Stomach (tissue), 19 donors: ENCODE measurements at regions of chr19 and their contacts with region 1.

Region 1: GRCh38 chr19:46265217-46265828 is 31.5 kb upstream of the HIF3A start:
- DNase-seq: peak; percentile 74 to 93
- H3K4me3 ChIP-seq: no peak overlapping the region
- H3K27ac ChIP-seq: no peak overlapping the region
- H3K4me1 ChIP-seq: peaks cover 0 to 14% (median 0%) of the 10 kb centered on the region in 4 donors
- H3K27me3 ChIP-seq: peaks cover 0 to 70% (median 7%) of the 10 kb centered on the region in 3 donors
- CTCF ChIP-seq: peak in 5 of 7 experiments; percentile 76 to 93 (median 90)
- EP300 ChIP-seq: no peak
- POLR2A ChIP-seq: no peak

Region 2: GRCh38 chr19:46025835-46026234 is 239.5 kb before region 1 on chr19:
- intact Hi-C with region 1: loop called (anchors 5 kb)
- DNase-seq: no peak
- H3K4me3 ChIP-seq: no peak overlapping the region
- H3K27ac ChIP-seq: no peak overlapping the region
- H3K4me1 ChIP-seq: peaks cover 0 to 14% (median 9%) of the 10 kb centered on the region in 4 donors
- H3K27me3 ChIP-seq: peaks cover 9 to 68% (median 19%) of the 10 kb centered on the region in 3 donors
- CTCF ChIP-seq: no peak
- EP300 ChIP-seq: no peak
- POLR2A ChIP-seq: no peak

Region 3: DNA sequence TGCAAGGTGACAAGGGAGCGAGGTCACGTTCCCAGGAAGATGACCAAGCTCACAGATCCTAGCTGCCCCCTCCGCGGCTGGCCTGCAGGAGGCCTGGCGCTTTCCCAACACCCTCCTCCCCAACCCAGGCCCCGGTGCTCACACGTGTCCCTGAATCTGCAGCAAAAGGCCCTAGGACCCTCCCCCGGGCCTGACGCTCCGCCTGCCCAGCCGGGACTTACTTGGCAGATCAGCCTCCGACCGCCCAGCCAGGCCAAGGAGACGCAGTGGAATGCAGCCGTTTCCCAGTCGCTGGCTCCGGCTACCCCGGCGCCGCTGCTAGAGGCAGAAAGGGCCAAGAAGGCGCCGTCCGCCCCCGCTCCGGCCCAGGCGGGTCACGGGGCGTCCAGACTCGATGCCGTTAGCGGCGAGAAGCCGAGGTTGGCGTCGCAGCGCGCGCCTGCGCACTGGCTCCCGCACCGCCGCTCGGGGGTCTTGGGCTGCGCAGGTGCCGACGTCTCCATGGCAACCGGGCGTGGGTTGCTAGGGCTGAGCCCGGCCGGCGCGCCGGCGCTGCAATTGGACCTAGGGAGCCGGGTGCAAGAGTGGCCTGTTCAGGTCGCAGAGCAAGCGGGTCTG is 205.9 kb after region 1 on chr19 and contains the start of gene PNMA8A:
- intact Hi-C with region 1: no loop called
- DNase-seq: peak; percentile 44 to 93
- H3K4me3 ChIP-seq: peak within 1 kb of the TSS; percentile 31 to 46 (median 42)
- H3K27ac ChIP-seq: peak within 1 kb of the TSS; percentile 18 to 74 (median 60)
- H3K4me1 ChIP-seq: peaks cover 11 to 19% (median 13%) of the 10 kb centered on the region in 4 donors
- H3K27me3 ChIP-seq: peaks cover 0 to 47% (median 16%) of the 10 kb centered on the region in 3 donors
- CTCF ChIP-seq: peak in 1 of 7 experiments; percentile 1
- EP300 ChIP-seq: no peak
- POLR2A ChIP-seq: no peak
- total RNA-seq, gene PNMA8A: 0.43 to 4.8 (median 3.1) TPM in 3 of 5 donors, not detected in the others